CD8-positive, alpha-beta T cell (primary cell): ENCODE measurements at regions of chr17 and their contacts with region 1.

Region 1: DNA sequence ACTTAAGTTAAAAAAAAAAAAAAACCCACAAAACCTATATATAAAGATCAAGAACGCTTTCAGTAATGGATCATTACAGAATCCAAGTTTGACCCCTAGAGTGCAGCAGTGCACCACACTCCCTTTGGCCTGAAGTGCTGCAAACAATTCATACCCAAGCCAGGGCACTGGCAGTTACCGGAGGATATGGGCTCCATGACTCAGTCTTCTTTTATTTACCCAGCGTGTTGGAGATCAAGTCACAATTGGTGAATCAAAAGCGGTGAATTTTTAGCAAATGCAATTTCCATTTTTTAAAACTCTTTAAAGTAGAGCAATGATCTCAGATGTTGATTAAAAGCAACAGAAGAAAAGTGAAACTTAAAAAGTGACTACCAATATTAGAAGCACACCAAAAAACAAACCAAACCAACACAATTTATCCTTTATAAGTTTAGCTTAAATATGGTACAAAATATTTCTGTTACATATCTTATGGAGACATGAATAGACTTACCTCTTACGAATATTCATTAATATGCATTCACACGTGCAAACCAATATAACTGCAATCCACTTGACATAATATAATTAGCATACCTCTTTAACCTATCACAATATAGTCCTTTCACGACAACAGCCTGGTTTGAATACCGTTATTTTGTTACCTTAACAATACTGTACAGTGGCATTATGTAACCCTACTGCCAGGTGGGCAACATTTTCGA is 46.3 kb downstream of the ZNF652 start:
- DNase-seq: peak; percentile 54 to 89 (median 80)
- ATAC-seq: peak; percentile 100
- H3K4me3 ChIP-seq: no peak overlapping the region
- H3K4me3 Mint-ChIP-seq: peak overlapping the region; percentile 69
- H3K27ac ChIP-seq: peak overlapping the region in 1 of 2 experiments; percentile 38
- H3K27ac Mint-ChIP-seq: peak overlapping the region; percentile 84
- H3K4me1 ChIP-seq: peaks cover 10% of the 10 kb centered on the region
- H3K4me1 Mint-ChIP-seq: peaks cover 23% of the 10 kb centered on the region
- H3K27me3 ChIP-seq: no peaks in the 10 kb centered on the region
- H3K27me3 Mint-ChIP-seq: no peaks in the 10 kb centered on the region
- CTCF ChIP-seq: peak; percentile 95

Region 2: DNA sequence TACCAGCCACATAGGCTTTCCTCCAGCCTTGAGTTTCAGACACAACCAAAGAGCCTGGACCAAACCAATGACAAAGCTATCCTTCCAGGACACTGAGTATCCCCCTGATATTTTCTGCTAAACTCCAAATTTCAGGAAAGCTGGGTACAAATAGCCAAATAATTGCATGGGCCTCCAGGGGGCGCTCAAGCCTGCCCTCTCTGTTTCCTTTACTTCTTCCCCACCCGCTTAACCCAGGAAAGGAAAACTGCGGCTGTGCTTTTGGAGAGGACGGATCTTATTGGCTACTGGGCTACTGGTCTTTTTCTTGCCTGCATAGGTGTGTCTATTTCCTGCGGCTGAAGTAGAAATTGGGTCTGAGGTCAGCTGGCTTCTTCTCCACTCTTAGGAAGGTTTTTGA is 135.4 kb before region 1 on chr17:
- CTCF ChIA-PET with region 1: interaction called, 15 read pairs
- POLR2A ChIA-PET with region 1: no interaction called
- intact Hi-C with region 1: no loop called
- DNase-seq: peak; percentile 39 to 82 (median 69)
- ATAC-seq: peak; percentile 42
- H3K4me3 ChIP-seq: no peak overlapping the region
- H3K4me3 Mint-ChIP-seq: no peak overlapping the region
- H3K27ac ChIP-seq: no peak overlapping the region
- H3K27ac Mint-ChIP-seq: no peak overlapping the region
- H3K4me1 ChIP-seq: no peaks in the 10 kb centered on the region
- H3K4me1 Mint-ChIP-seq: peaks cover 4% of the 10 kb centered on the region
- H3K27me3 ChIP-seq: peaks cover 0 to 3% of the 10 kb centered on the region in 2 experiments
- H3K27me3 Mint-ChIP-seq: no peaks in the 10 kb centered on the region
- CTCF ChIP-seq: peak; percentile 89

Region 3: GRCh38 chr17:49217651-49218413 is 97.9 kb before region 1 on chr17:
- CTCF ChIA-PET with region 1: no interaction called
- POLR2A ChIA-PET with region 1: no interaction called
- intact Hi-C with region 1: no loop called
- DNase-seq: peak; percentile 60 to 96 (median 80)
- ATAC-seq: peak; percentile 76
- H3K4me3 ChIP-seq: peak overlapping the region; percentile 12 to 24
- H3K4me3 Mint-ChIP-seq: peak overlapping the region; percentile 81
- H3K27ac ChIP-seq: peak overlapping the region; percentile 49 to 80
- H3K27ac Mint-ChIP-seq: peak overlapping the region; percentile 95
- H3K4me1 ChIP-seq: peaks cover 77% of the 10 kb centered on the region
- H3K4me1 Mint-ChIP-seq: peaks cover 71% of the 10 kb centered on the region
- H3K27me3 ChIP-seq: no peaks in the 10 kb centered on the region
- H3K27me3 Mint-ChIP-seq: no peaks in the 10 kb centered on the region
- CTCF ChIP-seq: no peak

Region 4: GRCh38 chr17:49343273-49343672 is 27.6 kb after region 1 on chr17:
- CTCF ChIA-PET with region 1: interaction called, 12 read pairs
- POLR2A ChIA-PET with region 1: interaction called, 5 read pairs
- intact Hi-C with region 1: loop called in 1 of 2 experiments (anchors 2 kb)
- DNase-seq: peak in 2 of 9 experiments; percentile 30 to 58
- ATAC-seq: peak; percentile 43
- H3K4me3 ChIP-seq: no peak overlapping the region
- H3K4me3 Mint-ChIP-seq: peak overlapping the region; percentile 70
- H3K27ac ChIP-seq: peak overlapping the region in 1 of 2 experiments; percentile 58
- H3K27ac Mint-ChIP-seq: peak overlapping the region; percentile 89
- H3K4me1 ChIP-seq: peaks cover 64% of the 10 kb centered on the region
- H3K4me1 Mint-ChIP-seq: peaks cover 65% of the 10 kb centered on the region
- H3K27me3 ChIP-seq: no peaks in the 10 kb centered on the region
- H3K27me3 Mint-ChIP-seq: no peaks in the 10 kb centered on the region
- CTCF ChIP-seq: no peak

Region 5: DNA sequence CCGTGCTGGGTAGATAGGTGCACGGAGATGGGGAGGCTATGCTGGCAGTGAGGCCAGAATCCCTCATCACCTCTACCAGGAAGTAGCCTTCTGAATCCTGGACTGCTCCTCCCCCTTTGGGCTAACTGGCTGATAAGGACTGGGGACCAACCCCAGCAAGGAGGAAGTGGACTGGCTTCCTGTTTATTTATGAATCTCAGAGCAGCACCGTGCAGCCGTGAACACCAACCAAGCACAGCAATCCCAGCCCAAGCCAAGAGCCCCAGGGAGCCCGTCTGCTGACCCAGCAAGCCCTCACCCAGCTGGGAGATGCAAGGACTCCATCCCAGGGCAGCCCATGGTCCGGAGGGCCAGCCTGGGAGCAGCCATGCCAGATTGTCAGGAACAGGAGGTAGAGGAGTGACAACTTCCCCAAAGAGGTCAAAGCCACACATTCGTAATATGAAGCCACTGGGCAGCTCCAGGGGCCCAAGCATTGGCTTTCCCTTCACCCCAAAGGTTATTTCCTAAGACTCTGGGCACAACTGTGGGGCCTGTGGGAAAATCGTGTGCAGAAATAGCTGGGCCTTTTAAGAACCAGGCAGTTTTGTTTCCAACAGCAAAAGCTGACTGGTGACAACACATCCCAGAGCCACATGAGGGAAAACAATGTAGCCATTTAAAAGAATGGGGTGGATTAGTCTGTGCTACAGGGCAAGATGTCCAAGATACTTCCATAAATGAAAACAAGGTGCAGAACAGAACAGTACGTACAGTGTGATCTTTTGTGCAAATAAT is 75.0 kb after region 1 on chr17:
- CTCF ChIA-PET with region 1: interaction called, 122 read pairs
- POLR2A ChIA-PET with region 1: interaction called, 3 read pairs
- intact Hi-C with region 1: loop called (anchors 1 kb)
- DNase-seq: peak in 2 of 9 experiments; percentile 12 to 51
- ATAC-seq: no peak
- H3K4me3 ChIP-seq: no peak overlapping the region
- H3K4me3 Mint-ChIP-seq: peak overlapping the region; percentile 65
- H3K27ac ChIP-seq: peak overlapping the region in 1 of 2 experiments; percentile 88
- H3K27ac Mint-ChIP-seq: peak overlapping the region; percentile 94
- H3K4me1 ChIP-seq: peaks cover 51% of the 10 kb centered on the region
- H3K4me1 Mint-ChIP-seq: peaks cover 68% of the 10 kb centered on the region
- H3K27me3 ChIP-seq: no peaks in the 10 kb centered on the region
- H3K27me3 Mint-ChIP-seq: no peaks in the 10 kb centered on the region
- CTCF ChIP-seq: no peak

Region 6: GRCh38 chr17:49407981-49408501 is 92.3 kb after region 1 on chr17:
- CTCF ChIA-PET with region 1: interaction called, 17 read pairs
- POLR2A ChIA-PET with region 1: no interaction called
- intact Hi-C with region 1: no loop called
- DNase-seq: peak; percentile 76 to 90 (median 85)
- ATAC-seq: peak; percentile 97
- H3K4me3 ChIP-seq: no peak overlapping the region
- H3K4me3 Mint-ChIP-seq: no peak overlapping the region
- H3K27ac ChIP-seq: peak overlapping the region in 1 of 2 experiments; percentile 1
- H3K27ac Mint-ChIP-seq: peak overlapping the region; percentile 17
- H3K4me1 ChIP-seq: peaks cover 27% of the 10 kb centered on the region
- H3K4me1 Mint-ChIP-seq: peaks cover 36% of the 10 kb centered on the region
- H3K27me3 ChIP-seq: no peaks in the 10 kb centered on the region
- H3K27me3 Mint-ChIP-seq: no peaks in the 10 kb centered on the region
- CTCF ChIP-seq: peak; percentile 94